HAP-1 (cell line): ENCODE measurements at regions of chr2 and their contacts with region 1.

Region 1: GRCh38 chr2:225637259-225637658 is 237.7 kb downstream of the NYAP2 start:
- DNase-seq: no peak
- H3K4me3 ChIP-seq: no peak overlapping the region
- H3K4me1 ChIP-seq: no peaks in the 10 kb centered on the region
- H3K27me3 ChIP-seq: no peaks in the 10 kb centered on the region

Region 2: GRCh38 chr2:224630659-224631550 is 1006.4 kb before region 1 on chr2:
- in situ Hi-C with region 1: no loop called
- DNase-seq: no peak
- H3K4me3 ChIP-seq: no peak overlapping the region
- H3K4me1 ChIP-seq: no peaks in the 10 kb centered on the region
- H3K27me3 ChIP-seq: no peaks in the 10 kb centered on the region

Region 3: DNA sequence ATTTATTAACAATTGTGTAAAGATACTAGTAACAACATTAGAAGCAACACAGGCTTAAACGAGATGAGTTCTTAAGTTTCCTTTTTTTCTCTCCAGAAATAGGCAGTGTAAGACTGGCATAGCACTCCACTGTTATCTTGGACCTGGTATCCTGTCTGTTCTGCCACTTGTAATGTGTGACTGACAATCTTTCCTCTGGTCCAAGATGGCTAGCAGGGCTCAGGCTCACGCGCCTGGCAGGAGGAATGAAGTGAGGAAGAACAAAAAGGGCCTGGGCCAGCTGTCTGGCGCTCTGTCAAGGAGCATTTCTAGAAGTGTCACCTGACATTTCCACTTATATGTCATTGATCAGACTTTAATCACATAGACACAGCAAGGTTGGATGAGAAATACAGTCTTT is 889.5 kb before region 1 on chr2:
- in situ Hi-C with region 1: no loop called
- DNase-seq: no peak
- H3K4me3 ChIP-seq: no peak overlapping the region
- H3K4me1 ChIP-seq: no peaks in the 10 kb centered on the region
- H3K27me3 ChIP-seq: no peaks in the 10 kb centered on the region

Region 4: DNA sequence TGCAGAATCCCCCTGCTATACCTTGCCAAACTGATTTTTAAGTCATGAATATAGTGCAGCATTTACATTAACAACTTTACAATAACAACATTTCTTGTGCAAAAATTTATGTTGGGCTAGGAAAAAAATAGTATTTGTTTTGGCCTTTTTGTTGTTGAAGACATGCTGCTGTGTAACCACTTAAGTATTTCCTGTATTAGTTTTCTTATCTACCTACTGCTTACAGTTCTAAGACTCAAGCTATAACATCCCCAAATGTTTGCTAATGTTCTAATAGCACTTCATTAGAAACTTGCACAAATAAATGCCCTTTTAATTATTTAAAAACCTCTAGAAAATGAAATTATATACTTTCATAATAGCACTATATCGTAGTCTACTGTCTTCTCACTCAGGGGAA is 440.7 kb before region 1 on chr2:
- in situ Hi-C with region 1: no loop called
- DNase-seq: no peak
- H3K4me3 ChIP-seq: no peak overlapping the region
- H3K4me1 ChIP-seq: no peaks in the 10 kb centered on the region
- H3K27me3 ChIP-seq: no peaks in the 10 kb centered on the region

Region 5: DNA sequence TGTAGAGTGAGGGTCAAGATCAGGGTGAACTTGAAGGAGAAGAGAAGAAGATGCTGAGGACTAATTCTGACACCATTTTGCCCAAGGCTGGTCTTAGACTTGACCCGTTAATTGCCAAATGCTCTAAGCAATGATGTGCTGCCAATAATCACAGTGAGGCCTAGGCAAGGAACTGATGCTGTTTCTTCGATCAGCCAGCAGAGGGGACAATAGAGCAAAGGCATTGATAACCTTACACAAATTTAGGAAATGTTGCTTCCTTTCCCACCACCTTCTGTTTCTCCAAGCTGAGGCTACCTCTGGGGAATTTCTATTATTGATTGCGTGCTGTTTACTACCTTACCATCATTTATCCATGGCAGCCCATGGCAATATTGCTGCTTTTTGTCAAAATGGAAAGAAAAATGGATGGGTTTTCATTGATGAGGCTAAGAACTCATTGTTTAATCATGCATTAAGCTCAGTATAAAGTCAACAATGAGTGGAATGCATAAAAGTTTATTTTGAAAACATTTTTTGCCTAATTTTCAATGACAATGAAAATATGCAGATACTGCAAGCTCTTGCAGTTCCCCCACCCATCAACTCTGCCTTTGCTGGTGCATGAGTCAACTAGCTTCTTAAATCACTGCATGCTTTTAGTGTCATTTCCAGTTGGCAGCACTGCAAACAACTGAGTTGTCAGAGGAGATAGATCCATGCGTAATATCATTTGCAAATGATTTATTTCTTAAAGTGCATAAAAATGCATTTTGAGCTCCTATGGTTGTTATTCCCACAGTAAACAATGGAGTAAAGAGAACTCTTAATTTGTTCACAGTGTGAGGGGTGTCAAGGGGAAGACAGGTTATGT is 354.2 kb before region 1 on chr2:
- in situ Hi-C with region 1: loop called (anchors 25 kb)
- DNase-seq: peak; percentile 14 to 22
- H3K4me3 ChIP-seq: no peak overlapping the region
- H3K4me1 ChIP-seq: no peaks in the 10 kb centered on the region
- H3K27me3 ChIP-seq: no peaks in the 10 kb centered on the region